ENCODE measurements at regions of chr11 and their contacts with region 1.

Region 1: DNA sequence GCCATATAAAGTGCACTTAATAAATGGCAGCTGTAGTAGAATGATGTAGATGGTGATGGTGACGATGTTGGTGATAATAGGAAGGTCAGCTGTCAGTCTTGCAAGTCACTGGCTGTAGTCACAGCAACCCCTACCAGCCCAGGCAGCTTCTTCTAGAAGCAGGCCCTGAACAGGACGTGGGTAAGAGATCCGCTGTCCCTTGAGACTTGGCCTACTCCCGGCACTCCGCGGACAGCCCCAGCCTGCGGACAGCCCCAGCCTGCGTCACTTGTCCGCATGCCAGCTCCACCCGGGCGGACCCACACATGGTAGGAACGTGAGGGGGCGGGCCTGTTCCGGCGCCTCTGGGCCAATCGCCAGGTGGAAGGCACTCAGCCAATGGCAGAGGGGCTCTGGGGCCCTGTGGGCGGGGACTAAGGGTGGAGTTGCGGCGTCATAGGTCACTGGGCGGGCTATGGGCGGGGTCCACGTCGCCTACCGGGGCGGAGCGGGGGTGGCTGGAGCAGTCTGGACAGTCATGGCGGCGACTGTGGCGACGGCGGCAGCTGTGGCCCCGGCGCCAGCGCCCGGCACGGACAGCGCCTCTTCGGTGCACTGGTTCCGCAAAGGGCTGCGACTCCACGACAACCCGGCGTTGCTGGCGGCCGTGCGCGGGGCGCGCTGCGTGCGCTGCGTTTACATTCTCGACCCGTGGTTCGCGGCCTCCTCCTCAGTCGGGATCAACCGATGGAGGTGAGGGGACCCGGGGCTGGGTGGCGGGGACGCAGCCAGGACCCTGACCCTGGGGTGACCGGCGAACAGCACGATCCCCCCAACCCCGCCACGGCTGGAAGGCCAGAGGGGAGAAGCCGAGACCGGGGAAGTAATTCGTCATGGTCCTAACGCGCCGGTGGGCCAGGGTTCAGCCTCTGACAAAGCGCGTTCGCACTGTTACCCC is at the start of gene CRY2:
- DNase-seq: peak; percentile 90 to 99 (median 97)
- ATAC-seq: peak; percentile 83 to 95 (median 92)
- H3K4me3 ChIP-seq: peak within 1 kb of the TSS; percentile 78 to 95
- H3K4me3 Mint-ChIP-seq: peak within 1 kb of the TSS; percentile 85 to 90 (median 87)
- H3K27ac ChIP-seq: peak within 1 kb of the TSS; percentile 97
- H3K27ac Mint-ChIP-seq: peak within 1 kb of the TSS; percentile 89 to 90
- H3K4me1 ChIP-seq: peaks cover 19 to 50% of the 10 kb centered on the region in 2 experiments
- H3K4me1 Mint-ChIP-seq: peaks cover 60 to 65% (median 64%) of the 10 kb centered on the region in 3 donors
- H3K27me3 ChIP-seq: no peaks in the 10 kb centered on the region
- H3K27me3 Mint-ChIP-seq: no peaks in the 10 kb centered on the region
- total RNA-seq, gene CRY2: 54.0 to 198 (median 63.5) TPM

Region 2: GRCh38 chr11:45543808-45544422 is 303.3 kb before region 1 on chr11:
- CTCF ChIA-PET with region 1: no interaction called
- POLR2A ChIA-PET with region 1: no interaction called
- DNase-seq: no peak
- ATAC-seq: no peak
- H3K4me3 ChIP-seq: no peak overlapping the region
- H3K4me3 Mint-ChIP-seq: no peak overlapping the region
- H3K27ac ChIP-seq: no peak overlapping the region
- H3K27ac Mint-ChIP-seq: no peak overlapping the region
- H3K4me1 ChIP-seq: no peaks in the 10 kb centered on the region
- H3K4me1 Mint-ChIP-seq: no peaks in the 10 kb centered on the region
- H3K27me3 ChIP-seq: peaks cover 0 to 19% of the 10 kb centered on the region in 2 experiments
- H3K27me3 Mint-ChIP-seq: peaks cover 19% of the 10 kb centered on the region in 2 donors

Region 3: DNA sequence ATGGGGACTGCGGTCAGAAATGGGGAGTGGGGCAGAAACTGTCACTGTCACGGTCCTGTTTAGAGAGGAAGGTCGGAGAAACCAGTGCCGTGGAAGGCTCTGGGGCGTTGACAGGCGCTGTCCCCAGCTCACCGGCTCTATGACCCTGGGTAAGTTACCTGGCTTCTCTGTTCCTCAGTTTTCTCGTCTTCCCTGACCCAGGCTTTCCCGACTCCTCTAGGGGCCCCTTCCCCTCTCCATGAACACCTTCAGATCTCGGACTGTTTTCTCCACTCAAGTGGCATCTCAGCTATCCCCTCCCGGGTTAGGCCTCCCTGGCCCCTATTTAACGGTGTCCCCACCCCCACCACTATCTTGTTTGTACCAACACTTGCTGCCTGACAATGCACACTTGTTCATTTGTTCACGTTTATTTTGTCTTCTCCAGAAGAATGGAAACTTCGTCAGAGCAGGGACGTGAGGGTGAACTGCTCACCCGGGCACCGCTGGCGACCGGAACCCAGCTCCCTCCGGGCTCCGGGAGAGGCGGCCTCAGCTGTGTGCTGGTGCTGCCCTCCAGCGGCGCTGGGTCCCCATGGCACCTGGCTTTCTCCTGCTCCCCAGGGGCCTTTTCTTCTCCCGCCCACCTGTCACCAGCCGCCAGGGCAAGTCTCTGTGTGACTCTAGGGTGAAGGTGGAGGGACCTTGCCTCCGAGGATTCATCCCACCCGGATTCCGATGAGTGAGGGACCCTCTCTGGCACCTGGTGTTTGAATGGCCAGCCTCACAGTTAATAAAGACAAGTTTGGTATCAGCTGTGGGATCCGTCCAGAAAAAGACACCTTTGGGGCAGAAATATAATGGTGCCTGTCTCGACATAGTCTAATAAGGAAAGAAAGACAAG is 75.4 kb before region 1 on chr11:
- CTCF ChIA-PET with region 1: interaction called, 4 to 10 read pairs
- POLR2A ChIA-PET with region 1: no interaction called
- DNase-seq: peak; percentile 41 to 86 (median 69)
- ATAC-seq: peak; percentile 87 to 89 (median 87)
- H3K4me3 ChIP-seq: peak overlapping the region; percentile 52 to 94
- H3K4me3 Mint-ChIP-seq: peak overlapping the region; percentile 88 to 96 (median 92)
- H3K27ac ChIP-seq: peak overlapping the region; percentile 48
- H3K27ac Mint-ChIP-seq: peak overlapping the region; percentile 72 to 85
- H3K4me1 ChIP-seq: peaks cover 6 to 19% of the 10 kb centered on the region in 2 experiments
- H3K4me1 Mint-ChIP-seq: peaks cover 15 to 27% (median 22%) of the 10 kb centered on the region in 3 donors
- H3K27me3 ChIP-seq: no peaks in the 10 kb centered on the region
- H3K27me3 Mint-ChIP-seq: no peaks in the 10 kb centered on the region

Region 4: DNA sequence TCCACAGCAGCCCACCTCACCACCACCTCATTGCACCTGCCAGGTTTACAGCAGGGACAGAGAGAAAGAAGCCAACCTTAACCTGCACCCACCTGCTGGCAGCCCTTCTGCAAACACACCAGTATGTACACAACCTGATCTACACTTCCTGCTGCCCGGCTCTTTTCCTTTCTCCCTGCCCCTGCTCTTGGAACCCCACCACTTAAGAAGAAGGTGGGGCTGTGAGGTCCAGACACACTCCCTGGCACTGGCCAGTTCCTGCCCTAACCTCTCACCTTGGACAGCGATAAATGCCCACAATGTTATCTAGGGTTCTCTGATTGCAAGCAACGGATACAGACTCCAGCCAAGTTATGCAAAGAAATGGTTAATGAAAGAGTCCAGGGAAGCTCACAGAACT is 53.1 kb before region 1 on chr11:
- CTCF ChIA-PET with region 1: no interaction called
- POLR2A ChIA-PET with region 1: no interaction called
- DNase-seq: no peak
- ATAC-seq: no peak
- H3K4me3 ChIP-seq: no peak overlapping the region
- H3K4me3 Mint-ChIP-seq: no peak overlapping the region
- H3K27ac ChIP-seq: no peak overlapping the region
- H3K27ac Mint-ChIP-seq: no peak overlapping the region
- H3K4me1 ChIP-seq: no peaks in the 10 kb centered on the region
- H3K4me1 Mint-ChIP-seq: no peaks in the 10 kb centered on the region
- H3K27me3 ChIP-seq: peaks cover 0 to 11% of the 10 kb centered on the region in 2 experiments
- H3K27me3 Mint-ChIP-seq: peaks cover 0 to 12% of the 10 kb centered on the region in 2 donors

Region 5: DNA sequence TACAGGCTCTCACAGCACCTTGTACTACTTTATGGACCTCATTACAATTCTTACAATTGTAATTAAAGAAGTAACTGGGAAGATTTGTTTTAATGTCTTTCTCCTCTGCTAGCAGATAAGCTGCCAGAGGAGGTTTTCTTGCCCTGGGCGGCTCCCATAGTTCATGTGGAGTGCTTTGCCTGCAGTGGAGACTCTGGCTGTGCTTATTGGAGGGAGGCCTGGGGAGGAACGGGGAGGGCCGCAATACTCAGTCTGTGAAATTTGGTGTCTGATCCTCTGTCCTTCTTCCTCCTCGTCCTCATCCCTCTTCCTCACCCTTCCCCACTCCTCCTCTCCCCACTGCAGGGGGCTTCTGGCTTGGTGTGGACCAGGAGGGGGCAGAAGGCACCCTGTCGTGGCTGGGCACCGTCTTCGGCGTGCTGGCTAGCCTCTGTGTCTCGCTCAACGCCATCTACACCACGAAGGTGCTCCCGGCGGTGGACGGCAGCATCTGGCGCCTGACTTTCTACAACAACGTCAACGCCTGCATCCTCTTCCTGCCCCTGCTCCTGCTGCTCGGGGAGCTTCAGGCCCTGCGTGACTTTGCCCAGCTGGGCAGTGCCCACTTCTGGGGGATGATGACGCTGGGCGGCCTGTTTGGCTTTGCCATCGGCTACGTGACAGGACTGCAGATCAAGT is 36.7 kb before region 1 on chr11:
- CTCF ChIA-PET with region 1: no interaction called
- POLR2A ChIA-PET with region 1: no interaction called
- DNase-seq: no peak
- ATAC-seq: no peak
- H3K4me3 ChIP-seq: no peak overlapping the region
- H3K4me3 Mint-ChIP-seq: no peak overlapping the region
- H3K27ac ChIP-seq: no peak overlapping the region
- H3K27ac Mint-ChIP-seq: peak overlapping the region in 1 of 2 donors; percentile 77
- H3K4me1 ChIP-seq: peaks cover 12 to 48% of the 10 kb centered on the region in 2 experiments
- H3K4me1 Mint-ChIP-seq: peaks cover 46 to 50% (median 48%) of the 10 kb centered on the region in 3 donors
- H3K27me3 ChIP-seq: no peaks in the 10 kb centered on the region
- H3K27me3 Mint-ChIP-seq: no peaks in the 10 kb centered on the region

Region 6: DNA sequence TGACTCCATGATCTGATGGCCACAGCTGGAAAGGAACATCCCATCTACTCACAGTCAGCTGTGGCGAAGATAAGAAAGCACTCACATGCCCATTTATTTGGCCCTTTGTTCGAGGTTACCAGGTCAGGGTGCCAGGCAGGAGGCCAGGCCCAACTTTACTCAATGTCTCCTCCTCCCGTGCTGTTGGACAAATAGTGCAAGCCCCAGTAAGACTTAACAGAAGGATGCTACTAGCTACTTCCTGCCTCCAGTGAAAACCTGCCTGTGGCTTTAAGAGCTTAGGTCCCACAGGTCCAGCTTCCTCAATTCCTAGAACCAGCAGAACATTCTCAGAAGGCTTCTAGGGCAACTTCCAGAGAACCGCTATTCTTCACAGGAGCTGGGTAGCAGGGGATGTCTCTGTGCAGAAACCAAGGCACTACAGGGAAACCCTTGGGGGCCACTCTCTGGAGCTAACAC is 12.9 kb before region 1 on chr11:
- CTCF ChIA-PET with region 1: interaction called, 5 to 6 read pairs
- POLR2A ChIA-PET with region 1: interaction called in 1 of 2 experiments, 10 read pairs
- DNase-seq: no peak
- ATAC-seq: peak; percentile 44 to 65 (median 47)
- H3K4me3 ChIP-seq: no peak overlapping the region
- H3K4me3 Mint-ChIP-seq: peak overlapping the region in 1 of 3 donors; percentile 46
- H3K27ac ChIP-seq: no peak overlapping the region
- H3K27ac Mint-ChIP-seq: peak overlapping the region in 1 of 2 donors; percentile 57
- H3K4me1 ChIP-seq: peaks cover 0 to 14% of the 10 kb centered on the region in 2 experiments
- H3K4me1 Mint-ChIP-seq: peaks cover 11 to 14% (median 12%) of the 10 kb centered on the region in 3 donors
- H3K27me3 ChIP-seq: peaks cover 0 to 7% of the 10 kb centered on the region in 2 experiments
- H3K27me3 Mint-ChIP-seq: no peaks in the 10 kb centered on the region

Region 7: GRCh38 chr11:45917623-45918330 is 70.5 kb after region 1 on chr11 and contains the start of gene PEX16:
- CTCF ChIA-PET with region 1: interaction called in 1 of 2 experiments, 6 read pairs
- POLR2A ChIA-PET with region 1: interaction called, 3 to 13 read pairs
- DNase-seq: peak; percentile 78 to 99 (median 96)
- ATAC-seq: peak; percentile 85 to 91 (median 89)
- H3K4me3 ChIP-seq: peak within 1 kb of the TSS; percentile 97 to 98
- H3K4me3 Mint-ChIP-seq: peak within 1 kb of the TSS; percentile 88 to 98 (median 91)
- H3K27ac ChIP-seq: peak within 1 kb of the TSS; percentile 95
- H3K27ac Mint-ChIP-seq: peak within 1 kb of the TSS; percentile 98 to 100
- H3K4me1 ChIP-seq: peaks cover 4 to 56% of the 10 kb centered on the region in 2 experiments
- H3K4me1 Mint-ChIP-seq: peaks cover 46 to 64% (median 56%) of the 10 kb centered on the region in 3 donors
- H3K27me3 ChIP-seq: peaks cover 0 to 10% of the 10 kb centered on the region in 2 experiments
- H3K27me3 Mint-ChIP-seq: peaks cover 0 to 5% of the 10 kb centered on the region in 2 donors
- total RNA-seq, gene PEX16: 49.4 to 87.5 (median 65.2) TPM

Region 8: GRCh38 chr11:46006418-46007070 is 159.3 kb after region 1 on chr11:
- CTCF ChIA-PET with region 1: interaction called in 1 of 2 experiments, 17 read pairs
- POLR2A ChIA-PET with region 1: interaction called in 1 of 2 experiments, 3 read pairs
- DNase-seq: peak in 12 of 35 experiments; percentile 1 to 76 (median 6)
- ATAC-seq: peak; percentile 50 to 86 (median 79)
- H3K4me3 ChIP-seq: no peak overlapping the region
- H3K4me3 Mint-ChIP-seq: no peak overlapping the region
- H3K27ac ChIP-seq: no peak overlapping the region
- H3K27ac Mint-ChIP-seq: no peak overlapping the region
- H3K4me1 ChIP-seq: no peaks in the 10 kb centered on the region
- H3K4me1 Mint-ChIP-seq: peaks cover 2 to 10% (median 8%) of the 10 kb centered on the region in 3 donors
- H3K27me3 ChIP-seq: no peaks in the 10 kb centered on the region
- H3K27me3 Mint-ChIP-seq: no peaks in the 10 kb centered on the region

Region 9: GRCh38 chr11:47225552-47226400 is 1378.5 kb after region 1 on chr11:
- CTCF ChIA-PET with region 1: no interaction called
- POLR2A ChIA-PET with region 1: no interaction called
- DNase-seq: no peak
- ATAC-seq: no peak
- H3K4me3 ChIP-seq: no peak overlapping the region
- H3K4me3 Mint-ChIP-seq: no peak overlapping the region
- H3K27ac ChIP-seq: no peak overlapping the region
- H3K27ac Mint-ChIP-seq: peak overlapping the region in 1 of 2 donors; percentile 63
- H3K4me1 ChIP-seq: no peaks in the 10 kb centered on the region
- H3K4me1 Mint-ChIP-seq: peaks cover 0 to 6% (median 6%) of the 10 kb centered on the region in 3 donors
- H3K27me3 ChIP-seq: no peaks in the 10 kb centered on the region
- H3K27me3 Mint-ChIP-seq: no peaks in the 10 kb centered on the region